Activated CD4-positive, alpha-beta memory T cell treated with anti-CD3 and anti-CD28 coated beads, Interleukin-2, amount 10 ng/mL, durations not matched to agents 7 days and 5 days (primary cell): ENCODE measurements at regions of chr7 and their contacts with region 1.

Region 1: GRCh38 chr7:123797673-123798527 is 47.1 kb upstream of the HYAL4 start:
- DNase-seq: no peak
- H3K4me3 Mint-ChIP-seq: no peak overlapping the region
- H3K27ac Mint-ChIP-seq: no peak overlapping the region
- H3K4me1 Mint-ChIP-seq: no peaks in the 10 kb centered on the region
- H3K27me3 Mint-ChIP-seq: no peaks in the 10 kb centered on the region

Region 2: GRCh38 chr7:123770378-123770777 is 27.5 kb before region 1 on chr7:
- CTCF ChIA-PET with region 1: no interaction called
- POLR2A ChIA-PET with region 1: no interaction called
- DNase-seq: no peak
- H3K4me3 Mint-ChIP-seq: peak overlapping the region; percentile 3
- H3K27ac Mint-ChIP-seq: no peak overlapping the region
- H3K4me1 Mint-ChIP-seq: peaks cover 15% of the 10 kb centered on the region
- H3K27me3 Mint-ChIP-seq: peaks cover 17% of the 10 kb centered on the region

Region 3: GRCh38 chr7:123865517-123866117 is 67.7 kb after region 1 on chr7:
- CTCF ChIA-PET with region 1: interaction called, 17 read pairs
- POLR2A ChIA-PET with region 1: no interaction called
- DNase-seq: peak; percentile 39
- H3K4me3 Mint-ChIP-seq: no peak overlapping the region
- H3K27ac Mint-ChIP-seq: no peak overlapping the region
- H3K4me1 Mint-ChIP-seq: no peaks in the 10 kb centered on the region
- H3K27me3 Mint-ChIP-seq: peaks cover 7% of the 10 kb centered on the region